Tibial artery (tissue), 4 donors: ENCODE measurements at regions of chr3 and their contacts with region 1.

Region 1: GRCh38 chr3:193620650-193621049 is 27.6 kb downstream of the OPA1 start:
- DNase-seq: no peak
- H3K4me3 ChIP-seq: no peak overlapping the region
- H3K27ac ChIP-seq: no peak overlapping the region
- H3K4me1 ChIP-seq: peaks cover 0 to 5% (median 0%) of the 10 kb centered on the region in 4 donors
- H3K27me3 ChIP-seq: no peaks in the 10 kb centered on the region
- CTCF ChIP-seq: no peak

Region 2: DNA sequence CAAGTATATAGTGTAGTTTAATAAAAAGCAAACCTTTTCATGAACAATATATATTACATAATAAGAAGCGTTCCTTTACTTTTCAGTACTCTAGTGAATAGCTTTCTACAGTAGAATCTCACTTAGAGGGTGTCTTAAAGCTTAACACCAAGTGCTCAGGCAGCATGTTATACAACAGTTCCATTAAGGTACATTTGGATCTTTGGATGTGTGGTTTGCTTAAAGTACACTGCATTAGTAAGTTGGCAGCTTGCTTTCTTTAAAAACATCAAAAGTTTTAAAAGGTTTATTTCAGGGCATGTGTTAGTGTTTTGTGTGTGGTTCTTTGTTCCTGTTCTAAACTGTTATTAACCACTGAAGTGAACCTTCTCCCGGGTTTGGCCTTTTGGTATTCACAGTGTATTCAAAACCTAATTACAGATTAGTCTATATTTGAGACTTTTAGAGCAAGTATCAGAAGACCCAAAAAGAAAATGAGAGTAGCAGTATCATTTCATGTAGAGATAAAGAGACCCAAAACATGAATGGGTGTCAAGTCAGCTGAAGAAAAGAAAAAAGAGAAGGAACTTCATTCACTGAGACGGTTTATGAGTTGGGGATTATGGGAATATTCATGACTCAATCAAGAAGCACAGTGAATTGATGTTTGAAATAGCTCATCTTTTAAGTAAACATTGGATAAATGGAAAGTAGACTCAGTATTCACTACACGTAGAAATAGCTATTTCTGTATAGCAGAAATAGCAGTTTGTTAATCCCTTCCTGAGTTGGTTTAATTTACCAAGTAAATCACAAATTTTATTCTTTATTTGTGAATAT is 66.2 kb after region 1 on chr3:
- intact Hi-C with region 1: loop called (anchors 2 kb)
- DNase-seq: no peak
- H3K4me3 ChIP-seq: no peak overlapping the region
- H3K27ac ChIP-seq: no peak overlapping the region
- H3K4me1 ChIP-seq: no peaks in the 10 kb centered on the region
- H3K27me3 ChIP-seq: no peaks in the 10 kb centered on the region
- CTCF ChIP-seq: no peak